ENCODE measurements at regions of chr13 and their contacts with region 1.

Region 1: GRCh38 chr13:101155920-101156319 is 260.4 kb downstream of the NALCN start:
- DNase-seq: no peak
- H3K4me3 Mint-ChIP-seq: no peak overlapping the region
- H3K27ac Mint-ChIP-seq: no peak overlapping the region
- H3K4me1 Mint-ChIP-seq: no peaks in the 10 kb centered on the region
- H3K27me3 Mint-ChIP-seq: peaks cover 23% of the 10 kb centered on the region

Region 2: GRCh38 chr13:100738176-100738855 is 417.6 kb before region 1 on chr13:
- CTCF ChIA-PET with region 1: no interaction called
- POLR2A ChIA-PET with region 1: no interaction called
- DNase-seq: no peak
- H3K4me3 Mint-ChIP-seq: no peak overlapping the region
- H3K27ac Mint-ChIP-seq: no peak overlapping the region
- H3K4me1 Mint-ChIP-seq: no peaks in the 10 kb centered on the region
- H3K27me3 Mint-ChIP-seq: peaks cover 5% of the 10 kb centered on the region

Region 3: DNA sequence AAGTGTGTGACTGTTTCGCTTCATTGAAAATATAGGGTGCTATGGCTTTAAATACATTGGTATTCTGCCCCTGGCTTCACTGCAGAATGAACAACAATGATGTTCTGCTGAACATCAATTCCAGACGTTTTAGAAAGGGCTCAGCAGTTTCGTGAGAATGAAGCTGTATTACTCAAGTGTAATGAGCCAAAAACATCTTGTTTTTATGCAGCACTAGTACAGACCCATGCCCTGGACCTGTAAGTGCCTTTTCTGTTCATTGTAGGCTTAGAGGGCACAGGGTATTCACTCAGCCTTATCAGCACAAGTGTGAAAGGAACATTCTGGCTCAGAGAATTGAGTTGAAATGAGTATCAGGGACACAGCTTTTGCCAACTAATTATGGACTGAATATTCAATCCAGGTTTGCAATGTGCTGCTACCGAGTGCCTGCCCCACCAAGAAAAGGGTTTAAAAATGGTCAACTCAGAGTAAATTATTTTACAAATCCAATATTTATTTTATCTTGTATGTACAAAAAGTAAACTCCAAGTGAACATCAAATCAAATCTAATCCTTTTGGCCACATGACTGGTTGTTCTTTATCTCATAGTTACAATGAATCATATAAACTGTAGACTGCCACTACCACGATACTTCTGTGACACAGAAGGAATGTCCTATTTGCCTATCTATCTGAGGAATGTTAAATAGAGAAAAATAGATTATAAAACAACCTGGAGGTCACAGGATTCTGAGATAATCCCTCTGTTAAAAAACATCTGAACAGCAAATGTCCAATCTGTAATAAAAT is 102.4 kb before region 1 on chr13:
- CTCF ChIA-PET with region 1: no interaction called
- POLR2A ChIA-PET with region 1: no interaction called
- DNase-seq: no peak
- H3K4me3 Mint-ChIP-seq: no peak overlapping the region
- H3K27ac Mint-ChIP-seq: no peak overlapping the region
- H3K4me1 Mint-ChIP-seq: no peaks in the 10 kb centered on the region
- H3K27me3 Mint-ChIP-seq: peaks cover 1% of the 10 kb centered on the region

Region 4: GRCh38 chr13:101144808-101145419 is 11.0 kb before region 1 on chr13:
- CTCF ChIA-PET with region 1: interaction called, 10 read pairs
- POLR2A ChIA-PET with region 1: no interaction called
- DNase-seq: no peak
- H3K4me3 Mint-ChIP-seq: no peak overlapping the region
- H3K27ac Mint-ChIP-seq: no peak overlapping the region
- H3K4me1 Mint-ChIP-seq: no peaks in the 10 kb centered on the region
- H3K27me3 Mint-ChIP-seq: peaks cover 29% of the 10 kb centered on the region

Measured in activated CD4-positive, alpha-beta memory T cell treated with anti-CD3 and anti-CD28 coated beads, Interleukin-2, amount 10 ng/mL, durations not matched to agents 7 days and 5 days (primary cell).